PC-9 (cell line): ENCODE measurements at regions of chr3 and their contacts with region 1.

Region 1: GRCh38 chr3:69104996-69105719 is 17.2 kb downstream of the LMOD3 start:
- DNase-seq: no peak
- H3K4me3 ChIP-seq: no peak overlapping the region
- H3K27ac ChIP-seq: no peak overlapping the region
- H3K4me1 ChIP-seq: peaks cover 9% of the 10 kb centered on the region; the same call in 1 of the 2 replicates
- H3K27me3 ChIP-seq: no peaks in the 10 kb centered on the region
- CTCF ChIP-seq: no peak

Region 2: DNA sequence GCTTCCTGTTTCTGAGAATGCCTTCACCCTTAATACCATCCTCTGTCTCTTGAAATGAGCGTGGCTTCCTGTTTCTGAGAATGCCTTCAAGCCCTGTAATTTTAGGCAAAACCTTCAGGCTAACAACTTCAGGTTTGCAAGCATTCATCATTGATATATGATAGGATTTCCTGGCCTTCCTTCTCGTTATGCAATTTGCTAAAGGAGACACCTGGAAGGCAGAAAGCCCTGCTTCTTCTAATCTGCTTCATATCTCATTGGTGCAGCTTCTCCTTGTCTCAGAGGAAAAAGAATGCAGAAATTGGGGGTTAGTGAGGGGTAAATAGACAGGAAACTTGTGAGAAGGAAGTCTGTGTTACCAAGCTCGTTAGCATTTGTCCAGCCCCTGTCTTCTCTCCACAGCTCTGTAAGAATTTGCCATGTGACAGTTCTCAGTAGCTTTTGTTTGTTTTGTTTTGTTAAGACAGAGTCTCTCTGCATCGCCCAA is 13.1 kb before region 1 on chr3:
- CTCF ChIA-PET with region 1: interaction called, 11 read pairs
- POLR2A ChIA-PET with region 1: interaction called, 22 read pairs
- intact Hi-C with region 1: loop called (anchors 2 kb)
- DNase-seq: peak in 1 of 2 experiments; percentile 61
- H3K4me3 ChIP-seq: no peak overlapping the region
- H3K27ac ChIP-seq: peak overlapping the region; percentile 52
- H3K4me1 ChIP-seq: peaks cover 59% of the 10 kb centered on the region
- H3K27me3 ChIP-seq: no peaks in the 10 kb centered on the region
- CTCF ChIP-seq: no peak